A673 (cell line): ENCODE measurements at regions of chr3 and their contacts with region 1.

Region 1: DNA sequence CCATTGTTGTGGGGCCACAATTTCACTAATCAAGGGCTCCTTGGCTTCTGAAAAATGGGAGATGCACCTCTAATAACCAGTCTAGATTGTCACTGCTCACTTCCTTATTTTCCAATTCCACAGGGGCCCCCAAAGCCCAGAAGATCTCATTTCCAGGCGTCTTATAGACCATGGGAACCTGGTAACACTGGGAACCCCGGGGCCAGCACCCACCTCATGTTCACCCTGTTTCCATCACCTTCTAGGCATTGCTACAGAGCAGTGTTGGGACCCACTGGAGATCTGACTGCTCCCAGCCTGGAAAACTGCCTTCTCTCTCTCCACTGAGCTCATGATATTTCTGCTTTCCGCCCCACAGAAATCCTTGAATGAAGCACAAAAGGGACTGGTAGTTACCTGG is 61.5 kb downstream of the TFRC start:
- DNase-seq: no peak
- H3K4me3 ChIP-seq: no peak overlapping the region
- H3K27ac ChIP-seq: no peak overlapping the region
- H3K4me1 ChIP-seq: no peaks in the 10 kb centered on the region
- H3K27me3 ChIP-seq: no peaks in the 10 kb centered on the region
- CTCF ChIP-seq: no peak

Region 2: DNA sequence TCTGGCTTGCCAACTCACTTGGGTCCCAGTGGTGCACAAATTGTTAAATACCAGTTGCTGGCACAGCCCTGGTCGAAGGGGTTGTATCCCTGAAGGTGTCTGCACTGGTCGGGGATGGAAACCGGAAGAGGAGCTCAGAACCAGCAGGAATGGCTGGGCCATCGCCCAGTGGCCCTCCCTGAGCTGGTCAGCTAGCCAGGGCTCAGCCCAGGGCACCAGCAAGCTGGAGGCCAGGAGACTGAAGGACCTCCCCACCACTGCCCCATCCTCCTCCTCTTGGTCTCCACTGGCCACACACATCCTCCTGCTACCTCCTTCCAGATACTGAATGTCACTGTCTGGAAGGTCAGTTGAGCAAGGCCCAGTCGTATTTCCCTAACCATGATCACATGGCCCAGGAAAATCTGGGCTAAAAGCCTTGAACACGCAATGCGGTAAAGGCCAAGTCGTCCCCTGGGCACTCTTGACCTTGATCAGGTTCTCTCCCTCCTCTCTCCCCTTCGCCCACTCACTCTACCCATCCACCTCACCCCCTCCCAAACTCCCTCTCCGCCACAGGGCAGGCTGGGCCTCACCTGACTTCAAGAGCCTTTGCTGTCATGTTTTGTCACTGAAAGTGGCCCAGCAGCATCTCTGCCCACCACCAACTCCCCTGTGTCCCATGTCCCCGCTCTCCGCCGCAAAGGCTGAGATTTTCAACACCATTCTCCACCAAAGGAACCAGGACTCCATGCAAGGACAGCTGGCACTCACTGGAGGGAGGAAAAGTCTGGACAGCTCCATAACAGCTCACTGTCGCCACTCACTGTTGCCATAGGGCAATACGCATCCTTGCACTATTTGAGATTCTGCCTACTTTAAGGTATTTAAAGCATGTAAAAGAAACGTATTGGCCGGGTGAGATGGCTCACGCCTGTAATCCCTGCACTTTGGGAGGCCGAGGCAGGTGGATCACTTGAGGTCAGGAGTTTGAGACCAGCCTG is 178.7 kb after region 1 on chr3:
- CTCF ChIA-PET with region 1: no interaction called
- POLR2A ChIA-PET with region 1: no interaction called
- intact Hi-C with region 1: loop called (anchors 5 kb)
- DNase-seq: peak; percentile 34
- H3K4me3 ChIP-seq: no peak overlapping the region
- H3K27ac ChIP-seq: no peak overlapping the region
- H3K4me1 ChIP-seq: no peaks in the 10 kb centered on the region
- H3K27me3 ChIP-seq: no peaks in the 10 kb centered on the region
- CTCF ChIP-seq: peak; percentile 40; the same call in 1 of the 2 replicates

Region 3: DNA sequence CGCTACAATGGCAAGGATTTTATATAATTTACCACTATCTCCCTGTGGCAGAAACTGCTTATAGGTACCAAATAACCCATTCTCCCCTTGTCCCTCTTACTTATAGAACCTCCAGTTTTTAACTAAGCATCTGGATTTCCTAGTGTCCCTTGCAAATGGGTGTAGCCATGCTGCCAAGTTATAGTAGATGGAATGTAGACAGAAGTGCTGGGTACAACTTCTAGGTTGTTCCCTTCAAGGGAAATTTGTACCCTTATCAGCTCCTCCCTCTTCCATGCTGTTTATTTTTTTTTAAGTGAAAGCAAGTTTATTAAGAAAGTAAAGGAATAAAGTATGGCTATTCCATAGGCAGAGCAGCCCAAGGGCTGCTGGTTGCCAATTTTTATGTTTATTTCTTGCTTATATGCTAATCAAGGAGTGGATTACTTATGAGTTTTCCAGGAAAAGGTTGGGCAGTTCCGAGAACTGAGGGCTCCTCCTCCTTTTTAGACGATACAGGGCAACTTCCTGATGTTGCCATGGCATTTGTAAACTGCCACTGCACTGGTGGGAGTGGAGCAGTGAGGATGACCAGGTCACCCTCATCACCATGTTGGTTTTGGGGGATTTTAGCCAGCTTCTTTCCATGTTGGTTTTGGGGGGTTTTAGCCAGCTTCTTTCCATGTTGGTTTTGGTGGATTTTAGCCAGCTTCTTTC is 357.9 kb after region 1 on chr3:
- CTCF ChIA-PET with region 1: no interaction called
- POLR2A ChIA-PET with region 1: no interaction called
- intact Hi-C with region 1: no loop called
- DNase-seq: no peak
- H3K4me3 ChIP-seq: no peak overlapping the region
- H3K27ac ChIP-seq: no peak overlapping the region
- H3K4me1 ChIP-seq: no peaks in the 10 kb centered on the region
- H3K27me3 ChIP-seq: no peaks in the 10 kb centered on the region
- CTCF ChIP-seq: no peak

Region 4: GRCh38 chr3:196872316-196872715 is 851.9 kb after region 1 on chr3:
- CTCF ChIA-PET with region 1: no interaction called
- POLR2A ChIA-PET with region 1: no interaction called
- intact Hi-C with region 1: no loop called
- DNase-seq: no peak
- H3K4me3 ChIP-seq: no peak overlapping the region
- H3K27ac ChIP-seq: no peak overlapping the region
- H3K4me1 ChIP-seq: peaks cover 7% of the 10 kb centered on the region
- H3K27me3 ChIP-seq: no peaks in the 10 kb centered on the region
- CTCF ChIP-seq: no peak